ENCODE measurements at regions of chr4 and their contacts with region 1.

Region 1: DNA sequence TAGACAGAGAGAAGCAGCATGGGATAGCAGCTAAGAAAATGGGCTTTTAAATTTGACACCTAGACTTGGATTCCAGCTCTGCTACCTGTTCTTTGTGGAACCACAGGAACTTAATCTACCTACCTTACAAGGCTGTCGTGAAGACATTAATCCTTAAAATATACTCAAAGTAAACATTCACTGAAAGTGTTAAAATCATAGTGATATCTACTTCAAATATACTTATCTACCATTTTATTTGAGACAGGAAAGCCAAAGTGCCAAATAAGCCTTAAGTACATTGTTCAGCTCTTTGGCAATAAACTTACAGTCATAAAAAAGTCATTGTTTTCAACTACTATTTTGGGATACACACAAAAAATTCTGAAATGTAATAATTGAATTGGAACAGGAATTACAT is 295.0 kb upstream of the PITX2 start:
- DNase-seq: no peak
- ATAC-seq: no peak
- H3K4me3 ChIP-seq: no peak overlapping the region
- H3K27ac ChIP-seq: no peak overlapping the region
- H3K4me1 ChIP-seq: no peaks in the 10 kb centered on the region
- H3K27me3 ChIP-seq: no peaks in the 10 kb centered on the region
- CTCF ChIP-seq: no peak

Region 2: DNA sequence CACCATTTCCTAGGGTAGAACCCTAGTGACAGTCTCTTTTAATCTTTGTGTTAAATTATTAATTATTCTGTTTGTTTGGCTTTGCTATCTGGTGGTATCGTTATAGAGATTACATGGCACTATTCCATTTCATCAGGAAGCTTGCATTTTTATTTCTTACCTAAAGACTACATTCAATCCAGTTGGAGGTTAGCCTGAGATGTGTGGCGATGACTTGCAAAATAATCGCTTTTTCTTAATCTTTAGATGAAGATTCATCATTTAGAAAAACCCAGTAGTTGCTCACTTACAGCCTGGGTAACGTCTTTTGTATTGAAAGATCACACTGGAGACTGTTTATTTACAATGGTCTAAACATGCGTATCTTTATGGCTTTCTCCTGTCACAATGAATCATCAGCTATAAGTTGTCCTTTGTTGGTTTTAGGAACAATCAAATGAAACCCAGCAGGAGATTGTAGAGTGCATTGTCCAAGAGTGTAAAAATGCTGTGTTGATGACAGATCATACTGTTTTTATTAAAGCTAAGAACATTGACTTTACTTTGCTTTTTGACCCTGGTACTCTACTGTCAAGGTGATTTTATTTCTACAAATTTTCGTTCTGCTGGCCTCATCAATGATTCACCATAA is 13.3 kb before region 1 on chr4:
- intact Hi-C with region 1: loop called in 1 of 10 experiments (anchors 2 kb)
- DNase-seq: no peak
- ATAC-seq: no peak
- H3K4me3 ChIP-seq: no peak overlapping the region
- H3K27ac ChIP-seq: no peak overlapping the region
- H3K4me1 ChIP-seq: no peaks in the 10 kb centered on the region
- H3K27me3 ChIP-seq: no peaks in the 10 kb centered on the region
- CTCF ChIP-seq: no peak

Measured in heart right ventricle (tissue), 16 donors.